A549 (cell line): ENCODE measurements at regions of chr6 and their contacts with region 1.

Region 1: DNA sequence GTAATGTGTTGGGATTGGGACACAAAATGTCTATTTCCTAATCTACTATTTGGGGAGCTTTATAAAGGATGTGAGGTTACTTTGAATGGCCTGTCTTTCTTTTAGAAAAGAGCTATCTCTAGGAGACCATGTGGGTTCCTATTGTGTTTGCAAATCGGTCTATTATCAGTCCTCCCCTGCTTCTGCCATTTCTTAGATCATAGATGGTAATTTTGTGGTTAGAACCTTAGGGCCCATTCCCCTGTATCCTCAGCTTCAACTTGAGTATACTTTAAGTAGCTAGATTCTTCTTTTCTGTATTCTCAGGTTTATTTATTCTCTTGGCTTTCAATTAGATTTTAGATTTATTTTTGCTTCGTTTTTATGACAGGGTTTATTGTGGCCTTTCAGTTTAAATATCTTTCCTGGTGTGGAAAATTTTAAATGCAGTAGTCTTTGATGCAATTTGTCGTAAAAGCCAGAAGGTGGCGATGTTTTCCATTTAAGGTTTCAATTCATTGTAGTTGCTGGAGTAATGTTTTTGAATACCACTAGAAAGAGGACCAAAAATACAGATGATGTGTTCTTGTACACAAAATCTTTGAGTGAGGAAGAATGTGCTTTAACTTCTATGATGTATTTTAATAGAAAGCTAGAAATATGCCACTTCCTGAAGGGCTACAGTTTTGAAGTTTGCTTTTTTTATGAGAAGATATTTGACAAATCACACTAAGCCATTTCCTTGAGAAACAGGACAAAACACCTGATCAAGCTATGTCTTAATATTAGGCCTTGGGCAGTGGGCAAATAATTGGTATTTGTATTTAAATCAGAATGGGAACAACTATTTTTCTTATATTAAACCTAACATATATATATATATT is 20.3 kb downstream of the TBPL1 start:
- DNase-seq: peak; percentile 39 to 53
- ATAC-seq: peak in 1 of 2 experiments; percentile 34; a peak in 1 of 6 replicates
- H3K4me3 ChIP-seq: no peak overlapping the region
- H3K27ac ChIP-seq: no peak overlapping the region
- H3K4me1 ChIP-seq: peaks cover 19% of the 10 kb centered on the region
- CTCF ChIP-seq: peak; percentile 66
- EP300 ChIP-seq: no peak
- POLR2A ChIP-seq: no peak
- RAD21 ChIP-seq: peak; percentile 66 to 74

Region 2: GRCh38 chr6:133756078-133756695 is 217.2 kb before region 1 on chr6:
- CTCF ChIA-PET with region 1: no interaction called
- POLR2A ChIA-PET with region 1: no interaction called
- DNase-seq: no peak
- ATAC-seq: no peak
- H3K4me3 ChIP-seq: no peak overlapping the region
- H3K27ac ChIP-seq: 0 out of 6 replicates have a peak overlapping the region, but pooled peaks of 1 of the 2 experiments have one; percentile 34
- H3K4me1 ChIP-seq: peaks cover 33% of the 10 kb centered on the region
- CTCF ChIP-seq: no peak
- EP300 ChIP-seq: no peak
- POLR2A ChIP-seq: no peak
- RAD21 ChIP-seq: no peak

Region 3: DNA sequence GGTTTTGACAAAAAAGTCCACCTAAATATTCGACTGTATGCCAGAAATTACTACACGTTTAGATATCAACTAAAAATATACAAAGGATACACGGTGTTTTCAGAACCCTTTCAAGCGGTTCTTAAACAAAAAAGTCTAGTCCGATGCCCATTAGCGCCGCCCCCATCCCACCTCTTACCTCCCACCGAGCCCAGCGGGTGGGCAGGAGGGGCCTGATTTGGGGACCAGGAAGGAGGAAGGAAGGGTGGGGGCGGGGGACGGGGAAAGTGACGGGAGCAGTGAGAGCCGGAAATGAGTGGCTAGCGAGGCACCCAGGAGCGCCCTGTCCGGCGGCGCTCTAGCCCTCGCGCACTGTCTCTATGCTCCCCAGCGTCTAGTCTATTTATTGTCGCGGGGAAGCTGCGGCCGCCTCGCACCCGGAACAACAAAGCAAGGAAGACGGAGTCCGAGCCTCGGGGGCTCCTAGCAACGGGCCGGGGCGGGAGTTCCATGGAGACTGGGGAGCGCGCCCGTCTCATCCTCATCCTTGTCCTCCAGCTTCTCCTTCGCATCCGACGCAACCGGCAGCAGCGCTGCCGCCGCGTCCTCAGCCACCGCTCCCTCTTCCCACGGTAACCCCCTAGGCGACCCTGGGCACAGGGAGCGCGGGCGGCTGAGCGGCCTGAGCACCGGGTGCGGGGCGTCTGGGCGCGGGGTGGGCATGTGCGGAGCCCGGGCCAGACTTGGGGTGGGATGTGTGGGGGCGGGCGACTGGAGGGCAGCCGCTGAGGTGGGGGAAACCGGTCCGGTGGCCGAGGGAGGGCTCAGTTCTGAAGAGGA is 20.3 kb before region 1 on chr6 and contains the start of gene TBPL1:
- CTCF ChIA-PET with region 1: interaction called, 14 read pairs
- POLR2A ChIA-PET with region 1: no interaction called
- DNase-seq: peak; percentile 73 to 96
- ATAC-seq: peak; percentile 93 to 96
- H3K4me3 ChIP-seq: peak within 1 kb of the TSS; percentile 77
- H3K27ac ChIP-seq: peak within 1 kb of the TSS; percentile 89 to 94
- H3K4me1 ChIP-seq: peaks cover 23% of the 10 kb centered on the region
- CTCF ChIP-seq: no peak
- EP300 ChIP-seq: no peak
- POLR2A ChIP-seq: peak; percentile 55
- RAD21 ChIP-seq: no peak
- polyA plus RNA-seq, gene TBPL1: 29.9 and 41.1 TPM in 2 replicates

Region 4: GRCh38 chr6:134021396-134022122 is 48.2 kb after region 1 on chr6:
- CTCF ChIA-PET with region 1: interaction called, 14 read pairs
- POLR2A ChIA-PET with region 1: no interaction called
- DNase-seq: no peak
- ATAC-seq: no peak
- H3K4me3 ChIP-seq: no peak overlapping the region
- H3K27ac ChIP-seq: no peak overlapping the region
- H3K4me1 ChIP-seq: peaks cover 4% of the 10 kb centered on the region
- CTCF ChIP-seq: no peak
- EP300 ChIP-seq: no peak
- POLR2A ChIP-seq: no peak
- RAD21 ChIP-seq: no peak

Region 5: DNA sequence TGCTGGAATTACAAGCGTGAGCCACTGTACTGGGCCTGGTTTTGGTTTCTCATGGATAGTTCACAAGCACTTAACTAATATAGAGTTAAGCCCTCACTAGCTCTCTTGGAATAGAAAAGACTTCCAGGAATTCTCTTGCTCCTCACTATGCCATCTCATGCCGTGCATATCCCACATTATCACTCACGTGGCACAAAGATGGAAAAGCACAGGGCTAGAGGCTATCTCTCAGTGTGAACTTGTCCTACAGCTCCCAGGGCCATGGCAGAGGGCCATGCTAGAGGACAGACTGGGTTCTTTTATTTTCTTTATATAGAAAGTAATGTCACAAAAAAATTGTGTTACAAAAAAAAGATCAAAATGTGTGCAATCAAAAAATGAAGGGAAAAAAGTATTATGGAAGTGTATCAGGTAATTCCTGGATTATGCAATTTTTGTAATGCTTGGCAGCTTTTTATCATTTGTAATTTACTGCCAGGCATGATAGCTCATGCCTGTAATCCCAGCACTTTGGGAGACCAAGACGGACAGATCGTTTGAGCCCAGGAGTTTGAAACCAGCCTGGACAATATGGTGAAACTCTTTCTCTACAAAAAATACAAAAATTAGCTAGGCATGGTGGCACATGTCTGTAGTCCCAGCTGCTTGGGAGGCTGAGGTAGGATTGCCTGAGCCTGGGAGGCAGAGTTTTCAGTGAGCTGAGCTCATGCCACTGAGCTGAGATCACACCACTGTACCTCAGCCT is 85.5 kb after region 1 on chr6:
- CTCF ChIA-PET with region 1: interaction called, 128 read pairs
- POLR2A ChIA-PET with region 1: no interaction called
- DNase-seq: no peak
- ATAC-seq: no peak
- H3K4me3 ChIP-seq: no peak overlapping the region
- H3K27ac ChIP-seq: peak overlapping the region in 1 of 2 experiments; percentile 52; a peak in 1 of 6 replicates
- H3K4me1 ChIP-seq: peaks cover 23% of the 10 kb centered on the region
- CTCF ChIP-seq: no peak
- EP300 ChIP-seq: no peak
- POLR2A ChIP-seq: no peak
- RAD21 ChIP-seq: no peak

Region 6: DNA sequence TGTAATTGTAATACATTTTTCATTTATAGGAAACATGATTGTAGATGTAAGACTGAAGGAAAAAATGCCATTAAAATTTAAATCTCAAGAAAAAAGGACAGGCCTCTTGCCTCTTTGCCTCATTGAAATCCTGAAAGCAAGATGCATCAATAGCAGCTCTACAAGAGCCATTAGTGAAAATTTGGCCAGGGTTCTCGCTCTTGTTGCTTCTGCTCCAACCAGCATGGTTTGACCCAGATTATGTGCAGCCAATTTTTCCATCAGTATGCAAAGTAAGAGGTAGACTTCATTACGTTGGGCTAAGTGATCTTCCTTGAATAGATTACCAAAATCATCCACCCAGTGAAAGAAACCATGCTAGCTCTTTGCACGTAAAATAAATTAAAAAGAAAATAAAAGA is 238.0 kb after region 1 on chr6:
- CTCF ChIA-PET with region 1: no interaction called
- POLR2A ChIA-PET with region 1: no interaction called
- DNase-seq: no peak
- ATAC-seq: no peak
- H3K4me3 ChIP-seq: no peak overlapping the region
- H3K27ac ChIP-seq: no peak overlapping the region
- H3K4me1 ChIP-seq: no peaks in the 10 kb centered on the region
- CTCF ChIP-seq: no peak
- EP300 ChIP-seq: no peak
- POLR2A ChIP-seq: no peak
- RAD21 ChIP-seq: no peak